Psoas muscle (tissue), 8 donors: ENCODE measurements at regions of chr5 and their contacts with region 1.

Region 1: GRCh38 chr5:115309751-115310370 is 13.4 kb upstream of the CCDC112 start:
- DNase-seq: no peak
- ATAC-seq: peak; percentile 49 to 83 (median 60)
- H3K4me3 ChIP-seq: no peak overlapping the region
- H3K27ac ChIP-seq: no peak overlapping the region
- H3K4me1 ChIP-seq: no peaks in the 10 kb centered on the region
- H3K27me3 ChIP-seq: no peaks in the 10 kb centered on the region
- CTCF ChIP-seq: peak; percentile 80

Region 2: GRCh38 chr5:115366223-115366622 is 56.4 kb after region 1 on chr5:
- intact Hi-C with region 1: loop called (anchors 5 to 10 kb)
- DNase-seq: peak; percentile 22 to 59
- ATAC-seq: peak; percentile 96 to 97 (median 97)
- H3K4me3 ChIP-seq: no peak overlapping the region
- H3K27ac ChIP-seq: peak overlapping the region; percentile 67
- H3K4me1 ChIP-seq: peaks cover 9% of the 10 kb centered on the region
- H3K27me3 ChIP-seq: no peaks in the 10 kb centered on the region
- CTCF ChIP-seq: peak; percentile 6

Region 3: DNA sequence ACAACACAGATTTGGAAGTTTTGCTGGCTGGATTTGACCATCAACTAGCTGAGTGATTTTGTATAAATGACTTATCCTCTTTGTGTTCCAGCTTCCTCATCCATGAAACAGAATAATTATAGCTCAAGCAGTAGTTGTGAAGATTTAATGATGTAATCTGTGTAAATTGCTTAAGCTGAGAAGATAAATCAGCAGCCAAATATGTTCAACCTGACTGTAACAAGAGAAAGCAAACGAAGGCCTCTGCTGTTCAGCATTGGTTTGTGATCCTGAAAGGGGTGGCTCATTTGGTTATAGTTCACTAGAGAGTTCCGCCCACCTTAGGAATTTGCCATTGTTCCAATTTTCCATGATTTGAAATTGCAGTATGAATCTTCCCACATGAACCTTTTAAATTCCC is 62.3 kb after region 1 on chr5:
- intact Hi-C with region 1: loop called (anchors 5 to 10 kb)
- DNase-seq: no peak
- ATAC-seq: peak in 3 of 4 donors; percentile 11 to 50 (median 40)
- H3K4me3 ChIP-seq: no peak overlapping the region
- H3K27ac ChIP-seq: peak overlapping the region; percentile 75
- H3K4me1 ChIP-seq: peaks cover 27% of the 10 kb centered on the region
- H3K27me3 ChIP-seq: no peaks in the 10 kb centered on the region
- CTCF ChIP-seq: no peak

Region 4: GRCh38 chr5:115586601-115587048 is 276.8 kb after region 1 on chr5:
- intact Hi-C with region 1: loop called (anchors 1 to 5 kb)
- DNase-seq: no peak
- ATAC-seq: peak; percentile 43 to 66 (median 52)
- H3K4me3 ChIP-seq: no peak overlapping the region
- H3K27ac ChIP-seq: no peak overlapping the region
- H3K4me1 ChIP-seq: peaks cover 29% of the 10 kb centered on the region
- H3K27me3 ChIP-seq: no peaks in the 10 kb centered on the region
- CTCF ChIP-seq: peak; percentile 71

Region 5: DNA sequence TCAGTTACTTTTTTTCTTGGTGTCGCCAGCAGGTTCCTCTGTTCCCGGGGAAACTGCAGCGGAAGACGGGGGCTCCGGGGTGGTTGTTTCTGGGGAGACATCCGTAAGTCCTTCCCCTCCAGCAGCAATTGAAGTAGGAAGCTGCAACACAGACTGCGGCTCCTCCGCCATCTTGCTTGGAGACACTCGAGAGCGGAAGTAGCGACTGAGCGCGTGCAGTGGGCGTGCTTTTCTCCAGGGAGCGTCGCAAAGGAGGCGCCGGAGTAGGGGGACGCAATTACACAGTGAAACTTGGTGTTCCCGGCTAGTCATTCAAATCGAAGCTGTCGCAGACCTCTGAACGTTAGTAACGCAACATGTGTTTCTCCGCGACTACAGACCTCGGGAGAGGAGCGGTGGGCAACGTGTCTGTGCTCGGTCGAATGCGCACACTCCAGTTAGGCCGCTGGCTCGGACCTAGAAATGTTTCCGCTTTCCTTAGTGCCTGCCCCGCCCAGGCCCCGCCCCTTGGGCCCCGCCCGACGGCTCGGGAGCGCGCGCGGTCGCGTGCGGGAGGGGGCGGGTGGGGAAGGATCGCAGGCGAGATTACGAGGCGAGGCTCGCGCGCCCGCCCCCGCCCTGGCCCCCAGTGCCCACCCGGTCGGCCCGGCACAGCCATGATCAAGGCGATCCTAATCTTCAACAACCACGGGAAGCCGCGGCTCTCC is 531.7 kb after region 1 on chr5 and contains the starts of genes AP3S1 and ATG12:
- intact Hi-C with region 1: loop called in 1 of 2 experiments (anchors 5 kb)
- DNase-seq: peak; percentile 92 to 95
- ATAC-seq: peak; percentile 95 to 96 (median 96)
- H3K4me3 ChIP-seq: peak within 1 kb of the TSS; percentile 87
- H3K27ac ChIP-seq: peak within 1 kb of the TSS; percentile 96
- H3K4me1 ChIP-seq: peaks cover 53% of the 10 kb centered on the region
- H3K27me3 ChIP-seq: no peaks in the 10 kb centered on the region
- CTCF ChIP-seq: no peak
- total RNA-seq, gene AP3S1: 20.2 to 29.6 (median 26.3) TPM
- total RNA-seq, gene ATG12: 20.3 to 32.8 (median 27.1) TPM

Region 6: GRCh38 chr5:116068028-116068632 is 758.3 kb after region 1 on chr5:
- intact Hi-C with region 1: loop called in 1 of 2 experiments (anchors 5 kb)
- DNase-seq: no peak
- ATAC-seq: peak in 1 of 4 donors; percentile 72
- H3K4me3 ChIP-seq: no peak overlapping the region
- H3K27ac ChIP-seq: no peak overlapping the region
- H3K4me1 ChIP-seq: no peaks in the 10 kb centered on the region
- H3K27me3 ChIP-seq: no peaks in the 10 kb centered on the region
- CTCF ChIP-seq: peak; percentile 86